ENCODE measurements at regions of chr11 and their contacts with region 1.

Region 1: GRCh38 chr11:2772544-2773031 is 72.8 kb upstream of the KCNQ1OT1 start:
- DNase-seq: no peak
- H3K4me3 ChIP-seq: no peak overlapping the region
- CTCF ChIP-seq: no peak

Region 2: DNA sequence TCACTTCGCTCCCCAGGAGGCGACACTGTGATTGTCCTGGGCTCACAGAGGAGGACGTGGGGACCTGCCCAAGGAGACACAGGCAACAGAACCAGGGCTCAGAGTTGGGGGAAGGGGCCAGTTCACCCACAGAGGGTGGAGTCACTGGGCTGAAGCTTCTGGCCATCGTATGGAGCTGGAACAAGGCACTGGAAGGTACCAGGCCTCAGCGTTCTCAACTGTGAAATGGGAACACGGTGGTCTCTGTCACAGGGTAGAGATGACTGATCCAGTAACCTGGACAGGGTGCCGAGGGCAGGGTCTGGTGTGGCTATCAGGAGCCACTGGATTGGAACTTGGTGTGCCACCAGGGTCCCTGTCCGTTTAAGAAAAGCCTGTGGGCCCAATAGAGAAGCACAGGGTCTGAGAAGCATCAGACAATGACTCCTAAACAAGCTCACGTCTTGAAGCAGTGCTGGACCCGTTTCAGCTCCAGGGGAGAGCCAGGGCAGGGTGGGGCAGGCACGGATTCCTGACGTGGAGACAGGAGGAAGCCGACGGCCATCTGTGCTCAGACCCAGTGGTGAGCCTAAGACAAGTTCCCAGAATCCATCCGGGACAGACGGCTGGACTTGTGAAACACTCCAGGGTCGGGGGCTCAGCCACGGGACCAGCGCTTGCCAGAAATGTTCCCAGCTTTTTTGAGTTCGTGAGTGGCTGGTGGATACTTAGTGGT is 47.8 kb before region 1 on chr11:
- in situ Hi-C with region 1: loop called (anchors 5 kb)
- DNase-seq: no peak
- H3K4me3 ChIP-seq: no peak overlapping the region
- CTCF ChIP-seq: no peak

Region 3: DNA sequence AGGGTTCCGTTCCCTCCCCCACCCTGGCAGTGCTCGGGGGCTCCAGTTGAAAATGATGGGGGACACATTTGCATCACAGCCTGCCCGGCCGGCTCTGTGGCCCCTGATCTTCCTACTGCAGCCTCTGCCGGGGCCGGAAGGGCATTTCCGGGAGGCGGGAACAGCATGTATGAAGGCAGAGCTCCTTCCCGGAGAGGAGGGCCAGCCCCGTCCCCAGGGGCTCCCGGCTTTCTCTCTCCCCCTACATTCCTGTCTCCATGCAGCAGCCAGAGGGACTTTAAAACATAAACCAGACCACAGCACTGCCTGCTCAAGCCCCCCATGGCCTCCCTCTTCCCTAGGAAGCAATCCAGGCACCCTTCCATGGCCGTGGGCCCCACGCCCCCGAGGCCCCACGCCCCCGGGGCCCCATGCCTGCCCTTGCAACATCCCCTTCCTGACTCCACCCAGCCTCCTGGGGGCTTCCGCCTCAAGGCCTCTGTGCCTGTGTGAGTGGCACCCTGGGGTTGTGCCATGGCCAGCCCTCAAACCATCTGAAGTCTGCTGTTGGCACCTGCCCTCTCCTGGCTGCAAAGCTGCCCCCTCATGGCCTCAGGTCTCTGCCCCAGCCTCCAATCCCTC is 39.9 kb after region 1 on chr11:
- in situ Hi-C with region 1: no loop called
- DNase-seq: no peak
- H3K4me3 ChIP-seq: no peak overlapping the region
- CTCF ChIP-seq: no peak